WTC11 (cell line): ENCODE measurements at regions of chr17 and their contacts with region 1.

Region 1: GRCh38 chr17:40191237-40192208 is 14.3 kb downstream of the RAPGEFL1 start:
- DNase-seq: peak; percentile 84
- ATAC-seq: peak; percentile 73
- H3K4me3 Mint-ChIP-seq: peak overlapping the region; percentile 82
- H3K27ac Mint-ChIP-seq: no peak overlapping the region
- H3K4me1 Mint-ChIP-seq: peaks cover 37% of the 10 kb centered on the region
- H3K27me3 Mint-ChIP-seq: peaks cover 3% of the 10 kb centered on the region; the same call in 1 of the 2 replicates
- CTCF ChIP-seq: no peak; the same call in 1 of the 2 replicates

Region 2: DNA sequence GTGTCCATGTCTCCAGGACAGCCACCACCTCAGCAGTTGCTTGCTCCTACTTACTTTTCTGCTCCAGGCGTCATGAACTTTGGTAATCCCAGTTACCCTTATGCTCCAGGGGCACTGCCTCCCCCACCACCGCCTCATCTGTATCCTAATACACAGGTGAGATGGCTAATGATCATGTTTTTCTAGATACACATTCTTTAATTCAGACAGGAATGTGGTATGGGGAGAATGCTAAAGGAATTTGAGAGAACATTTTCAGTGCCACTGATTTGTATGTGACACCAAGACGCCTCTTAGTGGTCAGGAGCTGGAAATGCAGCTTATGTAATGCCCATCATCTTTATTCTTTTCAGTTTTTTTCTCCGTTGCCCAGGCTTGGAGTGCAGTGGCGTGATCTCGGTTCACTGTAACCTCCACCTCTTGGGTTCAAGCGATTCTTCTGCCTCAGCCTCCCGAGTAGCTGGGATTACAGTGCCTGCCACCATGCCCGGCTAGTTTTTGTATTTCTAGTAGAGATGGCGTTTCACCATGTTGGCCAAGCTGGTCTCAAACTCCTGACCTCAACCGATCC is 23.2 kb before region 1 on chr17:
- CTCF ChIA-PET with region 1: interaction called, 15 read pairs
- POLR2A ChIA-PET with region 1: no interaction called
- DNase-seq: no peak
- ATAC-seq: peak; percentile 84
- H3K4me3 Mint-ChIP-seq: no peak overlapping the region
- H3K27ac Mint-ChIP-seq: peak overlapping the region; percentile 98
- H3K4me1 Mint-ChIP-seq: peaks cover 5% of the 10 kb centered on the region
- H3K27me3 Mint-ChIP-seq: no peaks in the 10 kb centered on the region; the same call in 1 of the 2 replicates
- CTCF ChIP-seq: no peak; the same call in 1 of the 2 replicates

Region 3: GRCh38 chr17:40177275-40177874 is 14.1 kb before region 1 on chr17 and contains the start of gene RAPGEFL1:
- CTCF ChIA-PET with region 1: interaction called, 75 read pairs
- POLR2A ChIA-PET with region 1: interaction called, 3 read pairs
- DNase-seq: peak; percentile 88
- ATAC-seq: peak; percentile 86
- H3K4me3 Mint-ChIP-seq: peak within 1 kb of the TSS; percentile 65
- H3K27ac Mint-ChIP-seq: no peak within 1 kb of the TSS
- H3K4me1 Mint-ChIP-seq: peaks cover 20% of the 10 kb centered on the region
- H3K27me3 Mint-ChIP-seq: no peaks in the 10 kb centered on the region
- CTCF ChIP-seq: no peak
- total RNA-seq, gene RAPGEFL1: 19.9 to 23.0 TPM (median 19.9 TPM) in 3 replicates

Region 4: DNA sequence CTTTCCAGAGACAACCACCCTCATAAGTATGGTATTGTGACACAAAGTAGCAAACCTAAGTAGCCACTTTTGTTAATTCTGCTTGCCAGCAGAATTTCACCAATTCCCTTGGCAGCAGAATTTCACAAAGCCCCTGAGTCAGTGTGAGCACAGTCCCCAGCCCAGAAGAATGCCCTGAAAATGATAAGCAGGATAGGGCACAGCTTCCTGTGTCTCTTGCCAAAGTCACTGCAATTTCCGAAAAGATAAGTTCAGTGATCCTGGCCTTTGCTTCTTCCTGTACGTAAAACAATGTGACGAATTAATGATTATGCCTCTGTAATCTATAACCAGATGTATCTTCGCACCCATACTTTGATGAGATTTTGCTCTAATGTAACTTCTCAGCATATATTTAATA is 11.6 kb after region 1 on chr17:
- CTCF ChIA-PET with region 1: interaction called, 34 read pairs
- POLR2A ChIA-PET with region 1: no interaction called
- DNase-seq: no peak
- ATAC-seq: no peak
- H3K4me3 Mint-ChIP-seq: no peak overlapping the region
- H3K27ac Mint-ChIP-seq: no peak overlapping the region
- H3K4me1 Mint-ChIP-seq: no peaks in the 10 kb centered on the region
- H3K27me3 Mint-ChIP-seq: peaks cover 5% of the 10 kb centered on the region
- CTCF ChIP-seq: no peak